ENCODE measurements at regions of chr4 and their contacts with region 1.

Region 1: GRCh38 chr4:149980941-149981340 is 97.3 kb upstream of the DCLK2 start:
- DNase-seq: peak; percentile 83
- H3K4me3 Mint-ChIP-seq: no peak overlapping the region
- H3K27ac Mint-ChIP-seq: no peak overlapping the region
- H3K4me1 Mint-ChIP-seq: peaks cover 7% of the 10 kb centered on the region
- H3K27me3 Mint-ChIP-seq: peaks cover 12% of the 10 kb centered on the region

Region 2: DNA sequence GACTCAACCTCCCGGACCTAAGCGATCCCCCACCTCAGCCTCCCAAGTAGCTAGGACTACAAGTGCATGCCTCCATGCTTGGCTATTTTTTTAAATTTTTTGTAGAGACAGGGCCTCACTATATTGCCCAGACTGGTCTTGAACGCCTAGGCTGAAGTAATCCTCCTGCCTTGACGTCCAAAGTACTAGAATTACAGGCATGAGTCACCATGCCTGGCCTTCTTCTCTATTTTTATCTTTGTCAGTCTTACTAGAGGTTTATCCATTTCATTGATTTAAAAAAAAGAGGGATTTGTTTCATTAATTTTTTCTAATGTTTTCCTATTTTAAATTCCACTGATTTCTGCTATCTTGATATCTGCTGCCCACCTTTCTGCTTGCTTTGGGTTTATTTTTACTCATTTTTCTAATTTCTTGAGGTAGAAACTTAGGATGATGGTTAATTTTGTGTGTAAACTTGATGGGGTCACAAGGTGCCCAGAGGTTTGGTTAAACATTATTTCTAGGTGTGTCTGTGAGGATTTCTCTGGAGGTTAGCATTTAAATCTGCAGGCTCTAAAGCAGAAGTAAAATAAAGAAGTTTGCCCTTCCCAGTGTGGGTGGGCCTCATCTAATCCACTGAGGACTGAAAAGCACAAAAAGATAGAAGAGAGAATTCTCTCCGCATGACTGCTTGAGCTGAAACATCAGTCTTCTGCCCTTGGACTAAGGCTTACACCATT is 18.9 kb before region 1 on chr4:
- intact Hi-C with region 1: no loop called
- DNase-seq: no peak
- H3K4me3 Mint-ChIP-seq: no peak overlapping the region
- H3K27ac Mint-ChIP-seq: no peak overlapping the region
- H3K4me1 Mint-ChIP-seq: no peaks in the 10 kb centered on the region
- H3K27me3 Mint-ChIP-seq: peaks cover 3% of the 10 kb centered on the region

Region 3: GRCh38 chr4:150078637-150079581 is 98.0 kb after region 1 on chr4:
- intact Hi-C with region 1: loop called (anchors 10 kb)
- DNase-seq: peak; percentile 65
- H3K4me3 Mint-ChIP-seq: peak overlapping the region; percentile 69
- H3K27ac Mint-ChIP-seq: no peak overlapping the region
- H3K4me1 Mint-ChIP-seq: peaks cover 4% of the 10 kb centered on the region
- H3K27me3 Mint-ChIP-seq: peaks cover 52% of the 10 kb centered on the region

Region 4: DNA sequence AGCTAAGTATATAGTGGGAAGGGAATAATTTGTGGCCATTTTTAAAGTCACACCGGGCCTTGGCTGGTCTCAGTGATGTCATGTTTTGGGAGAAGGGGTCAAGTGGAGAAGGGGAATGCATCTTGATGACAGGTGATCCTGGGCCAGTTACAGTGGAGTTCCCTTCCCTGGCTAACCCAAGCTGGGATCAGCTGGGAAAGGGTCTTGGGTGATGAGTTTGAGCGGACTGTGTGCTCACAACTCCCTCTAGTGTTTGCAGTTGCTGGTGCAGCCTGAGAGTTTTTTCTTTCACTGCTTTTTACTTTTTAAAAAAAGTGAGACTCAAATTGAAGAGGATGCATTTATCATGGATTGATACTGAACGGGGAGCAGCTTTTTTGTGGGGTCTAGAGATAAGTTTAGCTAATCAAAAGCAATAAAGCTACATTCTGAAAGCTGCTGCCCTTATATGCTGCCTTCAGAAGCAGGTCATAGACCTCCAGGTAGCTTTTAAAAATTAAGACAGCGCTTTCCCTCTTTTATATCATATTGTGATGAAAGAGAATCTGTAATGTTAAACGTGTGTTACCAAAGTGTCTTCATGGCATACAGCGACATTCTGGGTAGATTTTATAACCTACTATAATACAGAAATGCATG is 262.0 kb after region 1 on chr4:
- intact Hi-C with region 1: loop called (anchors 1 kb)
- DNase-seq: peak; percentile 68
- H3K4me3 Mint-ChIP-seq: no peak overlapping the region
- H3K27ac Mint-ChIP-seq: no peak overlapping the region
- H3K4me1 Mint-ChIP-seq: no peaks in the 10 kb centered on the region
- H3K27me3 Mint-ChIP-seq: peaks cover 2% of the 10 kb centered on the region

Region 5: GRCh38 chr4:150867148-150867547 is 886.2 kb after region 1 on chr4:
- intact Hi-C with region 1: loop called (anchors 1 kb)
- DNase-seq: peak; percentile 86
- H3K4me3 Mint-ChIP-seq: no peak overlapping the region
- H3K27ac Mint-ChIP-seq: no peak overlapping the region
- H3K4me1 Mint-ChIP-seq: no peaks in the 10 kb centered on the region
- H3K27me3 Mint-ChIP-seq: no peaks in the 10 kb centered on the region